HEK293T (cell line): ENCODE measurements at regions of chr18 and their contacts with region 1.

Region 1: DNA sequence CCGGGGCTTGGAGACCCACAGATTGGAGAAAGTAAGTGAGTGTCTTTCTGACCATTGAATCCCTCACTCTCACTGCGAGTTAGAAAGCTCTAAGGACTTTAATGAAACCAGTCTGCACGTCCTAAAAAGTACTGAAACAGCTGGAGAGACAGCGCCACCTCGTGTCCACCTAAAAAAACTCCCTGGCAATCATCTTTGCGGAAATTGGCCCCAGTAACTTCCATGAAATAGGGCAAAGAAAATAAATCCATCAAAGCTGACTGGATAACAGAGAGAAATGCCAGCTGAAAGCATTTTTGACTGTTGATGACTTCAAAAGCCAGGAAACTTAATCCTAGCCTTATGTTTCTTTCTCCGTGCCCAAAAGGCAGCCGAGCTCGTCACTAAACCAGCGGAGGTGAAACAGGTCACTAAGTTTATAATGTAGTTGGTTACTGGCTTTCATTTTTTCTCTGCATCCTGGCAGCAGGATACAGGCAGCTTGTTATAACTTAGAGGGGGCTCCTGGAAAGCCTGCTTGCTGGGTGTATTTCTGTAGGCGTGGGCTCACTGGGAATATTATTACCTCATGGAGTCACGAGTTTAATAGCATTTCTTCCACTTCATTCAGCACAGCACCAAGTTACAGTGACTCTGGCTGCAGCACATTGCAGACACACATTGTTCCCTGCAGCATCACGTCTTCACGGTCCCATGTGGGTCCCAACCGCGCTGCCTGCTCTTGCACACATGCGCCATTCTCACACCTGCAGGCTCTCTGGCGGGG is 266.5 kb downstream of the HRH4 start:
- DNase-seq: peak; percentile 62

Region 2: GRCh38 chr18:24543805-24544498 is 183.0 kb before region 1 on chr18:
- CTCF ChIA-PET with region 1: interaction called, 36 read pairs
- POLR2A ChIA-PET with region 1: no interaction called
- DNase-seq: peak; percentile 70

Region 3: GRCh38 chr18:24600076-24600654 is 126.7 kb before region 1 on chr18:
- CTCF ChIA-PET with region 1: interaction called, 29 read pairs
- POLR2A ChIA-PET with region 1: no interaction called
- DNase-seq: peak; percentile 65

Region 4: GRCh38 chr18:24605450-24605849 is 121.5 kb before region 1 on chr18:
- CTCF ChIA-PET with region 1: interaction called, 29 read pairs
- POLR2A ChIA-PET with region 1: no interaction called
- DNase-seq: no peak